HEK293T (cell line): ENCODE measurements at regions of chr17 and their contacts with region 1.

Region 1: GRCh38 chr17:47742319-47743181 is 9.5 kb downstream of the TBX21 start:
- DNase-seq: peak; percentile 83

Region 2: DNA sequence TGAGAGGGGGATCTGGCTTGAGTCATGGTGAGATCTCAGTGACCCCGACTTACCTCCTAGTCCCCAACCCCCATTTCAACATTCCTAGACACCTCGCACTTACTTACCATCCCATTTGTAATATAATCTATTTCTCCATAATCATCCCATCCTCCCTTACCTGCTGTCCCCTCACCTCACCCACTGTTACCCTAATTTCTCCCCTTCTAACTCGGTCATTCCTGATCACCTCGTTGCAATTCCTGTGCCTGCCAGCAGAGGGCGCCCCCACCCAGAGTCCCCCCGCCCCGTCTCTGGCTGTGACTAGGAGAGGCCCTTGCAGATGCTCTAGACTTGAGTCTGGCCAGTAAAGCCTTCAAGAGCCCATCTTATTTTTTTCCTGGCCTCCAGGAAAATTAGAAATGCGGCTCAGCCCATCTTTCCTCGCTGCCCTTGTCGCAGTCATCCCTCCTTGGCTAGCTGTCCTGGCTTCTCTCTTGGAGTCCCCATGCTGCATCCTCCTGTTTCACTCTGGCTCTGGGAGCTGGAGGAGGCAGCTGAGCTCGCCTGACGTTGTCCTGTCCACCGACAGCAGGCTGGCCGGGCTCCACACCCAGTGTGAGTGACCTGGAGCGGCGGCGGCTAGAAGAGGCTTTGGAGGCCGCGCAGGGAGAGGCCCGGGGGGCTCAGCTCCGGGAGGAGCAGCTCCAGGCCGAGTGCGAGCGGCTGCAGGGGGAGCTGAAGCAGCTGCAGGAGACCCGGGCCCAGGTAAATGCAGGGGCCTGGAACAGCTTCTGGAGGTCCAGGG is 43.6 kb before region 1 on chr17:
- CTCF ChIA-PET with region 1: interaction called, 10 read pairs
- POLR2A ChIA-PET with region 1: no interaction called
- DNase-seq: peak; percentile 91